Gastrocnemius medialis (tissue), 4 donors: ENCODE measurements at regions of chr1 and their contacts with region 1.

Region 1: GRCh38 chr1:6727535-6727934 is 25.9 kb upstream of the DNAJC11 start:
- DNase-seq: peak in 1 of 2 donors; percentile 30
- ATAC-seq: peak in 1 of 2 donors; percentile 65
- H3K4me3 ChIP-seq: peak overlapping the region in 1 of 4 donors; percentile 1
- H3K27ac ChIP-seq: no peak overlapping the region
- H3K4me1 ChIP-seq: peaks cover 0 to 3% of the 10 kb centered on the region in 2 donors
- H3K27me3 ChIP-seq: no peaks in the 10 kb centered on the region
- CTCF ChIP-seq: peak; percentile 70 to 86 (median 77)
- POLR2A ChIP-seq: no peak

Region 2: DNA sequence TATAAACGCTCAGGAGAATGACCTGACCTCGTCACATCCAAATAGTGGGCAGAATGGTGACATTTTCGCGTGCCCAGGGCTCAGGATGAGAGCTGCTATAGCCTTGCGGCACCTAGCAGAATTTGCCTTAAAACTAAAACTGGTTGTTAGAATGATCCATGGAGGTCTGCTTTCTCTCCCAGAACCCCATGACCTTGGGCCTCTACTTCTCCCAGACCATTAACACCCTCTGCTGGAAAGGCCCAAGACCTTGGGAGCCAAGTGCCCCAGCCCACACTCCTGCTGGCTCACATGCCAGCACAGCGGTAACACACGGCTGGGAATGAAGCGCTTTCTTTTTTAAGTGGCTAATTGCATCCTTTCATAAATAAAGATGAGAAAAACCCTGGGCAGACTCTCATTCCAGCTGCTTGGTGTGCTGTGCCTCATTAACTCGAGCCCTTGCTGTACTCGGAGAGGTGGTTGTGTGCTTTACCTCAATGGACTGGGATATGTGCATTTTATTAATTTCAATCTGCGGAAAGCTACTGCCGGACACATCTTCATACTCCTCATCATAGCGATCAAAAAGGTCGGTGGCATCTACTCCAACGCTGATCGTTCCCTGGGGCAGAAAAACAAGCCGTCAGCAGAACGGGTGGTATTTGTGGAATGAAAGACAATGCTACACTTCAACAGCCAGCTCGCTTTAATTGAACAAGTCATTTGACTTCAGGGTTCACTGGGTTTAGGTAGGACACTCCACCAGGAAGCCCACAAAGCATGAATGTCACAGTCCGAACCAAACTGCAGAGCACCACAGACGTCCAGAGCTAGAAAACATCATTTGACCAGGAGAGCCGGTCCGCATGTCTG is 73.9 kb before region 1 on chr1:
- in situ Hi-C with region 1: no loop called
- intact Hi-C with region 1: no loop called
- DNase-seq: no peak
- ATAC-seq: no peak
- H3K4me3 ChIP-seq: no peak overlapping the region
- H3K27ac ChIP-seq: no peak overlapping the region
- H3K4me1 ChIP-seq: no peaks in the 10 kb centered on the region
- H3K27me3 ChIP-seq: no peaks in the 10 kb centered on the region
- CTCF ChIP-seq: no peak
- POLR2A ChIP-seq: no peak

Region 3: GRCh38 chr1:6889875-6890480 is 162.4 kb after region 1 on chr1:
- in situ Hi-C with region 1: loop called (anchors 5 to 10 kb)
- intact Hi-C with region 1: loop called (anchors 2 kb)
- DNase-seq: peak in 1 of 2 donors; percentile 25
- ATAC-seq: peak; percentile 71 to 73
- H3K4me3 ChIP-seq: no peak overlapping the region
- H3K27ac ChIP-seq: no peak overlapping the region
- H3K4me1 ChIP-seq: no peaks in the 10 kb centered on the region
- H3K27me3 ChIP-seq: no peaks in the 10 kb centered on the region
- CTCF ChIP-seq: peak; percentile 45 to 80 (median 70)
- POLR2A ChIP-seq: no peak

Region 4: DNA sequence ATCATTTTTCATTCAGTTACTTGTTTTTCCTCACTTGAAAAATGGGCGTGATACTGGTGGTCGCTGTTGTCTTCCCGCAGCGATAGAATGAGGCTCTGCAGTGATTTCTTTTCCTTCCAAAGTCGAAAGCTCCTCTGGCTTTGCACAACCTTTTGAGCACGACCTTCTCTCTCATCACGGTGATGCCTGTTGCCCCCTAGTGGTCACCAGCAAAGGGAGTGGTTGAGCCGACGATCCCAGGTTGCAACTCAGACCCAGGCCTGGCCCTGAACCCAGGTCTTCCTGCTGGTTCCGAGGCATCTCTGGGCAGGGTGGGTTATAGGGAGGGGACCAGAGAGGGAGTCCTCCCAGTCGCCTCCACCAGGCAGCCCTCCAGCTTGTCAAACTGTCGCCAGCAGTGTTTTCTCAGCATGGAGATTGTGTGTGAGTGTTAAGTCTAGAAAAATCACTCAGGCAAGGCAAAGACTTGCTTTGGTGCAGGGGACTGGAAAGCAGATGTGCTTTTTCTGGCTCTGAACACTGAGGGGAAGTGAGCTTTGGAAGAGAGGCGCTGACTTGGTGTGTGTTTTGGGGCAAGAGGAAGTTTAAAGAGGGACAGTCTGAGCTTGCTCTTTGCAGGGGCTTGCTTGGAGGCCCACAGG is 343.0 kb after region 1 on chr1:
- in situ Hi-C with region 1: loop called (anchors 10 kb)
- intact Hi-C with region 1: no loop called
- DNase-seq: peak; percentile 47 to 48
- ATAC-seq: peak; percentile 77 to 92
- H3K4me3 ChIP-seq: peak overlapping the region; percentile 35 to 54 (median 42)
- H3K27ac ChIP-seq: no peak overlapping the region
- H3K4me1 ChIP-seq: peaks cover 0 to 5% of the 10 kb centered on the region in 2 donors
- H3K27me3 ChIP-seq: no peaks in the 10 kb centered on the region
- CTCF ChIP-seq: peak; percentile 67 to 88 (median 77)
- POLR2A ChIP-seq: no peak

Region 5: DNA sequence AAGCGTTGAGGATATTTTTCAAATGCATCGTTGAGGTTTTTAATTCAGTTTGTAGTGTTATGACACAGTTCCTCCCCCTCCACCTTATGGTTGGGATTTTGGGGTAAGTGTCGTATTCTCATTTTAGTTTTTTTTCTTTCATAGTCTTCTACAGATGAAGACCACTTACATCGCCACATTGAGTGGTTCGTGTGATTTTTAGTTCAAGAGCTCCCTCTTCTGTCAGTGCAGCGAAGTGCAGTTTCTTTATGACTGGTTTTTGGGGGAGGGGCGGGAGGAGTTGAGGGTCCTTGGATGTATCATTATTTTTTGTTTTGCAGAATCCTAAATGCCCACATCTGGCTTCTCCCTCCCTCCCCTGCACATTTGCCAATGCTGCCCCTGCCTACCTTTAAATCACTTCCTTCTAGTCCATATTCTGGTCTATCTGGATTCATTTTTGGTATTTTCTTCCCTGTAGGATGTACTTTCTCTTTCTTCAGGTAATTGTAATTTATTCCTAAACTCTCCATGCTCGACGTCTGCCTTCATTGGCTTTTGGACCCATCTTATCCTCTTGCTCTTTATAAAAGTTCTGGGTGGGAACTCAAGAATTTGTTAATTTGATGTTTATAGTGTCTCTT is 490.8 kb after region 1 on chr1:
- in situ Hi-C with region 1: loop called (anchors 5 to 10 kb)
- intact Hi-C with region 1: no loop called
- DNase-seq: no peak
- ATAC-seq: peak in 1 of 2 donors; percentile 45
- H3K4me3 ChIP-seq: no peak overlapping the region
- H3K27ac ChIP-seq: no peak overlapping the region
- H3K4me1 ChIP-seq: no peaks in the 10 kb centered on the region
- H3K27me3 ChIP-seq: no peaks in the 10 kb centered on the region
- CTCF ChIP-seq: peak; percentile 62 to 78 (median 71)
- POLR2A ChIP-seq: no peak

Region 6: DNA sequence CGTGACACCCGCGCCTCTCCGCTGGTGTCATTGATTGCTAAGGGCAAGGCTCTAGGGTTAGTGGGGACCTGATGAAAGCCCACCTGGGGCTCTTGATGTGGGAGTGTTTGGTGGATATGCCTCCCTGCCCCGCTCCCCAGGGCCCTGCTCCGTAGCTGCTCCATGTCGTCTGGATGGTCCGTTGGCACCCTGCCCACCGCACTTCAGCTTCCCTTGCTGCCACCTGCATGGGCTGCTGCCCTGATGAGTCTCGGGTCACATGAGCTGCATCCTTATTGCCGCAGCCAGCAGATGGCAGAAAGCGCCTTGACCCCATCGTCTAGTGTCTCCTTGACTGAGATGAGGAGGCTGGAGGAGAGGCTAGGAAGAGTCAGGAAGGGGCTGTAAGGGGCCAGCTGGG is 497.1 kb after region 1 on chr1:
- in situ Hi-C with region 1: loop called (anchors 5 to 10 kb)
- intact Hi-C with region 1: no loop called
- DNase-seq: no peak
- ATAC-seq: peak in 1 of 2 donors; percentile 50
- H3K4me3 ChIP-seq: no peak overlapping the region
- H3K27ac ChIP-seq: no peak overlapping the region
- H3K4me1 ChIP-seq: no peaks in the 10 kb centered on the region
- H3K27me3 ChIP-seq: no peaks in the 10 kb centered on the region
- CTCF ChIP-seq: peak in 2 of 5 experiments; percentile 13 to 33
- POLR2A ChIP-seq: no peak

Region 7: GRCh38 chr1:7630378-7630777 is 902.8 kb after region 1 on chr1:
- in situ Hi-C with region 1: loop called in 2 of 4 experiments (anchors 10 to 25 kb)
- intact Hi-C with region 1: no loop called
- DNase-seq: no peak
- ATAC-seq: no peak
- H3K4me3 ChIP-seq: no peak overlapping the region
- H3K27ac ChIP-seq: no peak overlapping the region
- H3K4me1 ChIP-seq: no peaks in the 10 kb centered on the region
- H3K27me3 ChIP-seq: peaks cover 0 to 8% (median 2%) of the 10 kb centered on the region in 3 donors
- CTCF ChIP-seq: no peak
- POLR2A ChIP-seq: no peak

Region 8: DNA sequence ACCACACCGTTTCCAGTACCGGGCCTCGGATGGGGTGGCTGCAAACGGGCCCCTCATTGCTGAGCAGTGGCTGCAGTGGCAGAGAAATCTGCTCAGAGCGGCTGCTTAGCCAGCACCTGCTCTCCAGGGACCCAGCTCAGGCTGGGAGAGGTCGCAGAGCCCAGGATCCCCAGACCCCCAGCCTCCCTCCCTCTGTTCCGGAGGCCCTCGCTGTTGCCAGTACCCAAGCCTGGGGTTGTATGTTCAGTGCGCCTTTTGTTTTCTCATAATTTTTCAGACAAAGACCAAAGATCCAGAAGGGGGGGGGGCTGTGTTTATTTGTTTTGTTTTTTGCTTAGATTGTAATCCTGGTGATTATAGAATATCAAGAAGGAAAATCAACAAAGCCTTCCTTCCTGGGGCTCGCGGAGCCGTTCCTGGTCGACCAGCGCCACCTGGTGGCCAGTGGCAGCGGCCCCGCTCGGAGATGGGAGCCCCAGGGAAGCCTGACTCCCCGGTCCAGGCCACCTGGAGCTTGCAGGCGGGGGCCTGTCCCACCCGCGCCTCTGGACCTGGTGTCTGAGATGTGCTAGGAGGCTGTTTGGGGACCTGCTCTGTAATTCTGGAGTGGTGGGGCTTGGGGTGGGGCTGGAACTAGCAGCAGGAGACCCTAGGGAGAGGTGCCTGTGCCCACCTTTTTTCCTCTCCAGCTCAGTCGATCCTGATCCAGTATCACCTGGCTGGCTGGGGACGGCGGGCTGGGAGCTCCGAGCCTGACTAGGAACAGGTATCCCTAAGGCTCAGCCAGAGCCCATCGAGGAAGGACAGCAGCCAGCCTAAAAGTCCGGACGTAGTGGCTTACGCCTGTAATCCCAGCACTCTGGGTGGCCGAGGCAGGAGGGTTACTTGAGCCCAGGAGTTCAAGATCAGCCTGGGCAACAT is 919.7 kb after region 1 on chr1:
- in situ Hi-C with region 1: loop called in 3 of 4 experiments (anchors 10 to 25 kb)
- intact Hi-C with region 1: loop called (anchors 5 kb)
- DNase-seq: peak in 1 of 2 donors; percentile 43
- ATAC-seq: peak; percentile 32 to 35
- H3K4me3 ChIP-seq: no peak overlapping the region
- H3K27ac ChIP-seq: no peak overlapping the region
- H3K4me1 ChIP-seq: peaks cover 19 to 20% of the 10 kb centered on the region in 2 donors
- H3K27me3 ChIP-seq: no peaks in the 10 kb centered on the region
- CTCF ChIP-seq: peak; percentile 74 to 97 (median 92)
- POLR2A ChIP-seq: no peak